Activated T-helper 2 cell treated with anti-CD3 and anti-CD28 coated beads, Interferon-gamma antibody, Interleukin-2, Interleukin-4, amounts not matched to agents 10 μg/mL and 5 μg/mL and 100 μg/mL, durations not matched to agents 14 hours and 24 hours and 36 hours (primary cell): ENCODE measurements at regions of chr1 and their contacts with region 1.

Region 1: GRCh38 chr1:24070821-24071393 is 41.0 kb downstream of the MYOM3 start:
- DNase-seq: peak; percentile 54
- H3K4me3 Mint-ChIP-seq: no peak overlapping the region
- H3K27ac Mint-ChIP-seq: no peak overlapping the region
- H3K4me1 Mint-ChIP-seq: no peaks in the 10 kb centered on the region
- H3K27me3 Mint-ChIP-seq: peaks cover 5% of the 10 kb centered on the region

Region 2: GRCh38 chr1:24111996-24112779 is 41.3 kb after region 1 on chr1 and contains the start of gene MYOM3:
- intact Hi-C with region 1: loop called (anchors 2 kb)
- DNase-seq: peak; percentile 45
- H3K4me3 Mint-ChIP-seq: no peak within 1 kb of the TSS
- H3K27ac Mint-ChIP-seq: no peak within 1 kb of the TSS
- H3K4me1 Mint-ChIP-seq: peaks cover 3% of the 10 kb centered on the region
- H3K27me3 Mint-ChIP-seq: peaks cover 20% of the 10 kb centered on the region
- total RNA-seq, gene MYOM3: not detected in 2 replicates

Region 3: DNA sequence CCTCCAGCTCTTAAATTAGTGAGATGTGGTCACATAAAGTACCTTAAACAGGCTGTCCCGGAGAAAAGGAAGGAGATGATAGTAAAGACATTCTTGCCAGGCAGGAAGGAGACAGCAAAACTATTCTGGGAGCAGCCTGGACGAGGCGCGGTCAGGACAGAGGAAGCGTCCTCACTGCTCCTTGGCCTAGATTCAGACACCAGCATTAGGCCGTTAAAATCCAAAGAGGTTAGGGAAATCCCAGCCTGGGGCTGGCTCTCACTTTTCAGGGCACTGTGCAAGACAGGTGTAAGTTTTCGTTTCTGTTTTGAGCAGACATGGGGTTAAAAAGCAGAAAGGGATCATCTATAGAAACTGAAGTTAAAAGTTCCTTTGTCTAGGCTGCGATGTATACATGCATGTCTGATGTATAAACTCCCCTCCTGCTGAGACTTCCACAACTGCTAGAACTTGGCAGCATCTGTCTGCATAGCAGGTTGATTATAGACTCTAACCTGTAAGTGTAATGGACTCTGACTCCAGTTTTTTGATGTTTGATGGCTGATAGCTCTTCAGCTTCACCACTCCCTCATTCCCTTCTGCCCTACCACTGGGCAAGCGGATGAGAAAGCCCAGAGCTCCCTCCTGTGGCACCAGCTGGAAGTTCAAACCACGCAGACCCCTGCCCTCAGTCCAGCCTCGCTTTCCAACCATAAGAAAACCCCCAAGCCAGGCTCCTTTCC is 321.1 kb after region 1 on chr1:
- intact Hi-C with region 1: loop called (anchors 5 kb)
- DNase-seq: peak; percentile 51
- H3K4me3 Mint-ChIP-seq: no peak overlapping the region
- H3K27ac Mint-ChIP-seq: peak overlapping the region; percentile 60
- H3K4me1 Mint-ChIP-seq: peaks cover 15% of the 10 kb centered on the region
- H3K27me3 Mint-ChIP-seq: no peaks in the 10 kb centered on the region